Activated naive CD8-positive, alpha-beta T cell treated with anti-CD3 and anti-CD28 coated beads, Interleukin-2, amount 10 ng/mL, durations not matched to agents 7 days and 5 days (primary cell): ENCODE measurements at regions of chr19 and their contacts with region 1.

Region 1: GRCh38 chr19:8194528-8195267 is 14.5 kb upstream of the CERS4 start:
- DNase-seq: peak; percentile 73
- ATAC-seq: peak; percentile 81
- H3K4me3 Mint-ChIP-seq: peak overlapping the region; percentile 89
- H3K27ac Mint-ChIP-seq: peak overlapping the region; percentile 99
- H3K4me1 Mint-ChIP-seq: peaks cover 39% of the 10 kb centered on the region
- H3K27me3 Mint-ChIP-seq: peaks cover 2% of the 10 kb centered on the region

Region 2: GRCh38 chr19:8180061-8180460 is 14.6 kb before region 1 on chr19:
- POLR2A ChIA-PET with region 1: interaction called, 21 read pairs
- DNase-seq: no peak
- ATAC-seq: no peak
- H3K4me3 Mint-ChIP-seq: no peak overlapping the region
- H3K27ac Mint-ChIP-seq: no peak overlapping the region
- H3K4me1 Mint-ChIP-seq: peaks cover 2% of the 10 kb centered on the region
- H3K27me3 Mint-ChIP-seq: peaks cover 2% of the 10 kb centered on the region

Region 3: DNA sequence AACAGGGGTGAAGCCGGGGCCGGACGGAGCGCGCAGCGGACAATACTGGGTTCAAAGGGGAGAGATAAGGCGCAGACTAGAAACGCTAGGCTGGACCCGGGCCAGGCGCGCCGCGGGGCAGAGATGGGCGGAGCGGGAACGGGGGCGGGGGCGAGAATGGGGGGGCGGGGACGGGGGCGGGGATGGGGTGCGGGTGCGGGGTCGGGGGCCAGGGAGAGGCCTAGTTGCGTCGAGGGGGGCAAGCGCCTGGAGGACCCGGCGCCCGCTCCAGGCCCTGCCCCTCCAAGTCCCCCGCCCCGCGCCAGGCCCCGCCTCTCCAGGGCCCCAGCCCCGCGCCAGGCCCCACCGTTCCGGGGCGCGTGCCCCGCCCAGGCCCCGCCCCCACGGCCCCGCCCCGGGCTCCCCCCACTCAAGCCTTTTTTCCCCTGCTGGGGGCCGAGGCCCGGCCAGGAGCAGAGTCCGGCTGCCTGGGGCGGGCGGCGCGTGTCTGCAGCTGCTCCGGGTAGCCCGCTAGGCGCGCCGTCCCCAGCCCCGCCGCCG is 14.3 kb after region 1 on chr19 and contains the start of gene CERS4:
- POLR2A ChIA-PET with region 1: interaction called, 52 read pairs
- DNase-seq: peak; percentile 88
- ATAC-seq: peak; percentile 79
- H3K4me3 Mint-ChIP-seq: peak within 1 kb of the TSS; percentile 92
- H3K27ac Mint-ChIP-seq: peak within 1 kb of the TSS; percentile 88
- H3K4me1 Mint-ChIP-seq: peaks cover 23% of the 10 kb centered on the region
- H3K27me3 Mint-ChIP-seq: peaks cover 4% of the 10 kb centered on the region
- total RNA-seq, gene CERS4: 32.5 to 32.8 TPM